ENCODE measurements at regions of chr3 and their contacts with region 1.

Region 1: DNA sequence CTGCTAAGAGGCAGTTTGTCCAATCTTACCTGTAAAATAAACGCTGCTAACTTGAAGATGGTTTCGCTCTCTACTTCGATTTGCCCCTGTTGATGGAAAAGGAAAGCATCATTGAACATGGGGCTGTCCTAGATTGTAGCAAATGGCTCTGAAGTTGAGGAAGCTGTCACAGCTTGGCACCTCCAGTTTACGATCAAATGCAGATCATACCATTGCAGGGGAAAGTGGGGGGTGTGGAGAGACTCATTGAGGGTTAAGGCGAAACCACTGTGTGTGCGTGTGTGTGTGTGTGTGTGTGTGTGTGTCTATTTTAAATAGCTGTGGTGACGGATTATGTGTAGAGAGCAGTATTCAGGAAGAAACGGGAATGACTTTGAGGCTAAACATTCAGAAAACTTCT is 127.6 kb upstream of the LMOD3 start:
- DNase-seq: peak; percentile 86 to 93
- H3K4me3 ChIP-seq: peak overlapping the region; percentile 43
- H3K4me3 Mint-ChIP-seq: peak overlapping the region; percentile 90
- H3K27ac Mint-ChIP-seq: peak overlapping the region; percentile 97
- H3K4me1 ChIP-seq: peaks cover 69% of the 10 kb centered on the region
- H3K4me1 Mint-ChIP-seq: peaks cover 40% of the 10 kb centered on the region
- H3K27me3 ChIP-seq: no peaks in the 10 kb centered on the region
- H3K27me3 Mint-ChIP-seq: no peaks in the 10 kb centered on the region
- CTCF ChIP-seq: no peak

Region 2: GRCh38 chr3:69178838-69179739 is 70.9 kb before region 1 on chr3:
- CTCF ChIA-PET with region 1: no interaction called
- POLR2A ChIA-PET with region 1: no interaction called
- intact Hi-C with region 1: loop called (anchors 2 kb)
- DNase-seq: peak in 1 of 2 experiments; percentile 52
- H3K4me3 ChIP-seq: no peak overlapping the region
- H3K4me3 Mint-ChIP-seq: no peak overlapping the region
- H3K27ac Mint-ChIP-seq: peak overlapping the region; percentile 66
- H3K4me1 ChIP-seq: peaks cover 11% of the 10 kb centered on the region
- H3K4me1 Mint-ChIP-seq: peaks cover 6% of the 10 kb centered on the region
- H3K27me3 ChIP-seq: no peaks in the 10 kb centered on the region
- H3K27me3 Mint-ChIP-seq: no peaks in the 10 kb centered on the region
- CTCF ChIP-seq: no peak

Region 3: GRCh38 chr3:69200384-69201068 is 49.5 kb before region 1 on chr3:
- CTCF ChIA-PET with region 1: no interaction called
- POLR2A ChIA-PET with region 1: interaction called, 3 read pairs
- intact Hi-C with region 1: loop called (anchors 2 kb)
- DNase-seq: peak; percentile 73 to 74
- H3K4me3 ChIP-seq: peak overlapping the region; percentile 22
- H3K4me3 Mint-ChIP-seq: peak overlapping the region; percentile 73
- H3K27ac Mint-ChIP-seq: peak overlapping the region; percentile 94
- H3K4me1 ChIP-seq: peaks cover 47% of the 10 kb centered on the region
- H3K4me1 Mint-ChIP-seq: peaks cover 40% of the 10 kb centered on the region
- H3K27me3 ChIP-seq: no peaks in the 10 kb centered on the region
- H3K27me3 Mint-ChIP-seq: no peaks in the 10 kb centered on the region
- CTCF ChIP-seq: no peak

Region 4: GRCh38 chr3:69264444-69265026 is 14.5 kb after region 1 on chr3:
- CTCF ChIA-PET with region 1: no interaction called
- POLR2A ChIA-PET with region 1: no interaction called
- intact Hi-C with region 1: loop called (anchors 1 kb)
- DNase-seq: no peak
- H3K4me3 ChIP-seq: no peak overlapping the region
- H3K4me3 Mint-ChIP-seq: no peak overlapping the region
- H3K27ac Mint-ChIP-seq: peak overlapping the region; percentile 6
- H3K4me1 ChIP-seq: peaks cover 10% of the 10 kb centered on the region
- H3K4me1 Mint-ChIP-seq: peaks cover 11% of the 10 kb centered on the region
- H3K27me3 ChIP-seq: no peaks in the 10 kb centered on the region
- H3K27me3 Mint-ChIP-seq: no peaks in the 10 kb centered on the region
- CTCF ChIP-seq: no peak

Region 5: DNA sequence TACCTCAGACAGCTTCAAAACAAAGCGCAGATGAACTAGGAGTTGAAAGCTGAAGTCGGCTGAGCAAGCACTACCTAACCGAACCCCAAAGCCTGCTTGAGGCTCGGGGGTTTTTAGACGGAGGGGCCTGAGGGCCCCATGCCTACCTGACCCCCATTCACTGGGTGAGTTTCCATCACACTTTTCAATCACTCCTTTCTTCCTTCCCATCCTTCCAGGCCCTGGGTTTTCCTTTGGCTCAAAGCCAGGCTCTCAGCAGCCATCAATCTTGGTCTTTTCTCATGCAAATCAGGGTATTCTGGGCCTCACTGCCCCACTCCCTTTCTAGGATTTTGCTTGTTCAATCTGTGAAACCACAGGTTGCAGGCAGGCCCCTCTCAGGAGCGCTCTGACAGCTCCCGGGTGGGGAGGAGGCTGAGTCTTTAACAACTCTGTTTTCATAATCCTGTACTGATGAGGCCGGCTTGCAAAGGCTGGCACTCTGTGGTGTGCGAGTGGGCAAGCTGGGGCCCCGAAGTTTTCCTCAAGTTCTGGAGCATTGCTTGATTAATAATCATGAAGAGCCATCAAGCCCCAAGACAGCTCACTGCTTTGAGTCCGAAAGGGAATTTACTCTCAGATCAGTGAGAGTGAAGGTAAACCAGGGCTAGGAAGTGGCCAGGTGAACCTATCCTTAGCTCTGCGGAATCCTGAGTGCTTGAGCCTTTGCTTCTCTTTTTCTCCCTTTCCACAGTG is 38.3 kb after region 1 on chr3:
- CTCF ChIA-PET with region 1: no interaction called
- POLR2A ChIA-PET with region 1: no interaction called
- intact Hi-C with region 1: loop called (anchors 2 kb)
- DNase-seq: peak; percentile 42 to 60
- H3K4me3 ChIP-seq: no peak overlapping the region
- H3K4me3 Mint-ChIP-seq: peak overlapping the region; percentile 56
- H3K27ac Mint-ChIP-seq: peak overlapping the region; percentile 86
- H3K4me1 ChIP-seq: peaks cover 64% of the 10 kb centered on the region
- H3K4me1 Mint-ChIP-seq: peaks cover 27% of the 10 kb centered on the region
- H3K27me3 ChIP-seq: no peaks in the 10 kb centered on the region
- H3K27me3 Mint-ChIP-seq: no peaks in the 10 kb centered on the region
- CTCF ChIP-seq: no peak

Region 6: DNA sequence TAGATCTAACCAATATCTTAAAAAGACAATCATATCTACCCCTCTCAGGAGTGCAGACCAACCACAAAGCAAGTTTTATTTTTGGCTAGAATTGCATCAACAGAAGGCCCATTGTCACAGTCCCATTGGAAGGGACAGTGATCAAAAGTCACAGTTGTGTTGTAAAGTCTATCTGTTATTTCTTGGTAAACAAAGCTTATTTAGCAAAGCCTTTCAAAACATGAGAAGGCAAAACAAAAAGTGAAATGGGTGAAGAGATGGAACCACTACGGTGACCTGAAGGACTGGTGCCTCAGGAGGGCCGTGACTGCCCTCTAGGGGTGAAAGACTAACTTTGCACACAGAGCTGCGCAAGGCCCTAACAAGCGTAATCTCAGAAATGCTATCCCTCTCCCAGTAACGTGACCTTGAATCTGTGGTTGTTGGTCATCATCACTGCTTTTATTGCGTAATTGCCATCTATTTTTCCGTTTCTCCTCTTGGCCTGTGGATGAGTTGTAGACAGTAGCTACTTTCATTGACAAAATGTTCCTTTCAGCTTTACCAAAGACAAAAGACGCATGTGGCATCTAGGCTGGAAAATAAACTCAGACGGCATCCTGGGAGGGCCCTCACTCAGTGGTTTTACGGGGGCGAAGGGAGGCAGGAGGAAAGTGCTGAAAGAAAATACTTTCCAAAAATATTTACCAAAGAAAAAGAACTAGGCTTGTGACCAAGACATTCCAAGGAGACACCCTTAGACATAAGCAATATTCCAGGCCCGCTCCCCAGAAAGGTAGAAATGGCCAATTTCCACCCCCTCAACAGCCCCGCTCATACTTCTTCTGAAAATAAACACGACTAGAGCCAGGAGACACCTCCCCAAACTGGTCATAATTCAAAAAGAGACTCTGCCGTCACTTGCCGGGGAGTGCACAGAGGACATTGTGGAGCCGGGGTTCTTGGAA is 56.5 kb after region 1 on chr3:
- CTCF ChIA-PET with region 1: interaction called, 3 read pairs
- POLR2A ChIA-PET with region 1: no interaction called
- intact Hi-C with region 1: loop called (anchors 1 kb)
- DNase-seq: peak; percentile 66 to 77
- H3K4me3 ChIP-seq: no peak overlapping the region
- H3K4me3 Mint-ChIP-seq: no peak overlapping the region
- H3K27ac Mint-ChIP-seq: no peak overlapping the region
- H3K4me1 ChIP-seq: peaks cover 25% of the 10 kb centered on the region
- H3K4me1 Mint-ChIP-seq: peaks cover 11% of the 10 kb centered on the region
- H3K27me3 ChIP-seq: no peaks in the 10 kb centered on the region
- H3K27me3 Mint-ChIP-seq: no peaks in the 10 kb centered on the region
- CTCF ChIP-seq: peak; percentile 85 to 87

Region 7: DNA sequence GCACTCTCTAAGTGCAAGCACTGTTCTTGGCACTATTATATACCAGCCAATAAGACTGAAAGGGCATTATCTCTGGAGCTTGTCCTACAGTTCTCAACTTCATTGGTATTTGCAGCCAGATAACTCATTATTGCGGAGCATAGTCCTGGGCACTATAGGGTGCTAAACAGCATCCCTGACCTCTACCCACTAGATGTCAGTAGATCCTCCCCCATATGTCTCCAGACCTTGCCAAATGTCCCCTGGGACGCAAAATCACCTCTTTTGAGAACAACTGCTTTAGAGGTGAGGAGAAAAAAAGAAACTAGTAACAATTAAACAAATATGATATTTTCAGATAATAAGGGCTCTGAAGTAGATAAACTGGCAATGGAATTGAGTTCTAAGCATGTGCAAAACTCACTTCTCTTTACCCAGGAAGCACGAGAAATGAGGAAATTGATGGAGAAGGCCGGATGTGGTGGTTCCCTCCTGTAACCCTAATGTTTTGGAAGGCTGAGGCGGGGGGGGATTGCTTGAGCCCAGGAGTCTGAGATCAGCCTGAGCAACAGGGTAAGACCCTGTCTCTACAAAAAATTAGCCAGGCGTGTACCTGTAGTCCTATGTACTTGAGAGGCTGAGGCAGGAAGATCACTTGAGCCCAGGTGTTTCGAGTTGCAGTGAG is 74.5 kb after region 1 on chr3:
- CTCF ChIA-PET with region 1: interaction called, 6 read pairs
- POLR2A ChIA-PET with region 1: no interaction called
- intact Hi-C with region 1: loop called (anchors 1 kb)
- DNase-seq: peak in 1 of 2 experiments; percentile 27
- H3K4me3 ChIP-seq: no peak overlapping the region
- H3K4me3 Mint-ChIP-seq: no peak overlapping the region
- H3K27ac Mint-ChIP-seq: peak overlapping the region; percentile 81
- H3K4me1 ChIP-seq: peaks cover 49% of the 10 kb centered on the region
- H3K4me1 Mint-ChIP-seq: peaks cover 30% of the 10 kb centered on the region
- H3K27me3 ChIP-seq: no peaks in the 10 kb centered on the region
- H3K27me3 Mint-ChIP-seq: no peaks in the 10 kb centered on the region
- CTCF ChIP-seq: peak; percentile 50 to 52

Measured in Caco-2 (cell line).